CD8-positive, alpha-beta T cell (primary cell): ENCODE measurements at regions of chr1 and their contacts with region 1.

Region 1: DNA sequence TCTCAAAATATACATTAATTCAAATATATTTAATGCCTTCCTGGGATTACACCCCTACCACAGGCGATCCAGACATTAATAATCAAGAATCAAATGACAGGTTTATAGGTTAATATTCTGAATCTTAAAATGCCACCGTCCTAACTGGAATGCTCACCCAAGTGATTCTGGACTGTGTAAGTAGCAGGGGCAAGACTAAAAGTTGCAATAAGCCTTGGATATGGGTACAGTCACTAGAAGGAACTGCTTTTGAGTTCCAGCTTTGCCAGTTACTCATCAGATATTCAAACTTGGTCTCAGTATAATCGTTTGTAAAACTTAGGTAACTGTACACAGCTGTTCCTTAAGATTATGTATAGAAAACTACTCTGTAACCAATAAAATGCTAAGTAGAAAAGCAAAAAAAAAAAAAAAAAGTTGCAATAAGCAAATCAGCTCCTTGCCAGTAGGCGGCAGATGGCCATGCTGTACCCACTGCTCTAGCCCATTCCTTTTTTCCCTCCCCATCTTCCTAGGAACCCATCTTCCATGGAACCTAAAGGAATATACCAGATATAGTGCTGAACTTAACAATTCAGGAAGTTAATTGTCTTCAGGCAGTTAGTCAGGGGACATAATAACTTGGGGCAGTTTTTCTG is 10.5 kb downstream of the RO60 start:
- DNase-seq: peak in 2 of 9 experiments; percentile 32 to 51
- ATAC-seq: peak; percentile 52
- H3K4me3 ChIP-seq: no peak overlapping the region
- H3K4me3 Mint-ChIP-seq: no peak overlapping the region
- H3K27ac ChIP-seq: peak overlapping the region in 1 of 2 experiments; percentile 74
- H3K27ac Mint-ChIP-seq: peak overlapping the region; percentile 73
- H3K4me1 ChIP-seq: peaks cover 15% of the 10 kb centered on the region
- H3K4me1 Mint-ChIP-seq: peaks cover 59% of the 10 kb centered on the region
- H3K27me3 ChIP-seq: no peaks in the 10 kb centered on the region
- H3K27me3 Mint-ChIP-seq: no peaks in the 10 kb centered on the region
- CTCF ChIP-seq: no peak

Region 2: GRCh38 chr1:193087893-193088292 is 18.0 kb after region 1 on chr1:
- CTCF ChIA-PET with region 1: no interaction called
- POLR2A ChIA-PET with region 1: interaction called, 3 read pairs
- intact Hi-C with region 1: loop called in 1 of 2 experiments (anchors 2 kb)
- DNase-seq: no peak
- ATAC-seq: no peak
- H3K4me3 ChIP-seq: no peak overlapping the region
- H3K4me3 Mint-ChIP-seq: no peak overlapping the region
- H3K27ac ChIP-seq: no peak overlapping the region
- H3K27ac Mint-ChIP-seq: no peak overlapping the region
- H3K4me1 ChIP-seq: no peaks in the 10 kb centered on the region
- H3K4me1 Mint-ChIP-seq: no peaks in the 10 kb centered on the region
- H3K27me3 ChIP-seq: no peaks in the 10 kb centered on the region
- H3K27me3 Mint-ChIP-seq: no peaks in the 10 kb centered on the region
- CTCF ChIP-seq: no peak

Region 3: GRCh38 chr1:193104906-193105820 is 35.3 kb after region 1 on chr1 and contains the start of gene GLRX2:
- CTCF ChIA-PET with region 1: no interaction called
- POLR2A ChIA-PET with region 1: interaction called, 3 read pairs
- intact Hi-C with region 1: loop called in 1 of 2 experiments (anchors 2 kb)
- DNase-seq: peak; percentile 12 to 79 (median 72)
- ATAC-seq: peak; percentile 97
- H3K4me3 ChIP-seq: peak within 1 kb of the TSS; percentile 61 to 70
- H3K4me3 Mint-ChIP-seq: peak within 1 kb of the TSS; percentile 96
- H3K27ac ChIP-seq: peak within 1 kb of the TSS; percentile 33 to 38
- H3K27ac Mint-ChIP-seq: peak within 1 kb of the TSS; percentile 88
- H3K4me1 ChIP-seq: peaks cover 14% of the 10 kb centered on the region
- H3K4me1 Mint-ChIP-seq: peaks cover 24% of the 10 kb centered on the region
- H3K27me3 ChIP-seq: no peaks in the 10 kb centered on the region
- H3K27me3 Mint-ChIP-seq: no peaks in the 10 kb centered on the region
- CTCF ChIP-seq: no peak
- total RNA-seq, gene GLRX2: 3.4 to 4.2 TPM